A549 (cell line): ENCODE measurements at regions of chr3 and their contacts with region 1.

Region 1: DNA sequence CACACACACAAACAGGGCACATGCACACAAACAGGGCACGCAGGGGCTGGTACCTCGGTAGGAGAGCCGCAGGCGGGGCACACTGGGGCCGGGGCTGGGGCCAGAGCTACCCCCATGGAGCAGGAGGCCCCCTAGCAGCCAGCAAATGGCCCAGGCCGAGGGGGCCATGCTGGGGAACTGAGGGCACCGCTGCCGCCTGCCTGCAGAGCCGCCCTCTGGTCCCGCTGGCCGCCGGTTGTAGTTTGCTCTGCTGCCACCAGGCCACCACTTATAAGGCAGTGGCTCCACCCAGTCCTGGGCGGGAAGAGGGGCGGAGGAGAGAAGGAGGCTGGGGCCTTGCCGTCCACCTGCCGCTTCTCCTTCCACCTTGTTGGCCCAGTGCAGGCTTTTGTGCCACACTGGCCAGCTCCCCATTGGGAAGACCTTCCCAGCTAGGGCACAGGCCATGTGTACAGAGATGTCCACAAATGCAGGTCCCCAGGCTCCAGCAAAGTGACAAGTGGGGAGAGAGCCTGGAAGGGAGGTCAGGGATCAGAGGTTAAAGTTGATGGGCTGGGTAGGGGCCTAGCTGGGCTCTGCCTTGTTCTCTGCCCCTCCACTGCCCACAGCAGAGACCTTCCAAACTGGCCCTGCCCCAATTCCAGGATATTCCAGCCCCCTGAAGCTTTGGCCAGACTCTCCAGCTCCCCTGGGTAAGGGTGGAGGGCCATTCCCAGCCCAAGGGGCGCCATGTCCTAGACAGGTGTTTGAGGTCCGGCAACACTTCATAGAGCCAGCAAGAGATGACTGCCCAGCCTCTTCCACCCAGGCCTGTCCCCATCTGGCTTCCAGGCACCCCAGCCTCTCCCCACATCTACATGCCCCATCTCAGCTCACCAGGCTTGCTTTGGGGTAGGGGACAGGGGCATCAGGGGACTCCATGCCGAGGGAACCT is at the start of gene SEMA3G:
- DNase-seq: peak; percentile 50 to 72
- ATAC-seq: peak; percentile 79 to 93
- H3K4me3 ChIP-seq: no peak within 1 kb of the TSS
- H3K27ac ChIP-seq: peak within 1 kb of the TSS in 1 of 2 experiments; percentile 55; a peak in 2 of 6 replicates
- H3K4me1 ChIP-seq: peaks cover 6% of the 10 kb centered on the region
- CTCF ChIP-seq: no peak
- EP300 ChIP-seq: no peak
- POLR2A ChIP-seq: peak; percentile 44; the same call in 1 of the 2 replicates
- RAD21 ChIP-seq: no peak
- polyA plus RNA-seq, gene SEMA3G: 0.05 and 0.08 TPM in 2 replicates

Region 2: GRCh38 chr3:52428151-52429005 is 16.7 kb before region 1 on chr3:
- CTCF ChIA-PET with region 1: interaction called, 351 read pairs
- POLR2A ChIA-PET with region 1: no interaction called
- DNase-seq: peak; percentile 45 to 61
- ATAC-seq: peak; percentile 93 to 98
- H3K4me3 ChIP-seq: no peak overlapping the region
- H3K27ac ChIP-seq: no peak overlapping the region
- H3K4me1 ChIP-seq: no peaks in the 10 kb centered on the region
- CTCF ChIP-seq: peak; percentile 68
- EP300 ChIP-seq: no peak
- POLR2A ChIP-seq: no peak
- RAD21 ChIP-seq: peak; percentile 64 to 74